ENCODE measurements at regions of chr16 and their contacts with region 1.

Region 1: GRCh38 chr16:85947230-85948137 is 48.5 kb downstream of the IRF8 start:
- DNase-seq: peak; percentile 89
- H3K4me3 Mint-ChIP-seq: peak overlapping the region; percentile 38
- H3K27ac Mint-ChIP-seq: peak overlapping the region; percentile 84
- H3K4me1 Mint-ChIP-seq: peaks cover 70% of the 10 kb centered on the region
- H3K27me3 Mint-ChIP-seq: peaks cover 3% of the 10 kb centered on the region

Region 2: DNA sequence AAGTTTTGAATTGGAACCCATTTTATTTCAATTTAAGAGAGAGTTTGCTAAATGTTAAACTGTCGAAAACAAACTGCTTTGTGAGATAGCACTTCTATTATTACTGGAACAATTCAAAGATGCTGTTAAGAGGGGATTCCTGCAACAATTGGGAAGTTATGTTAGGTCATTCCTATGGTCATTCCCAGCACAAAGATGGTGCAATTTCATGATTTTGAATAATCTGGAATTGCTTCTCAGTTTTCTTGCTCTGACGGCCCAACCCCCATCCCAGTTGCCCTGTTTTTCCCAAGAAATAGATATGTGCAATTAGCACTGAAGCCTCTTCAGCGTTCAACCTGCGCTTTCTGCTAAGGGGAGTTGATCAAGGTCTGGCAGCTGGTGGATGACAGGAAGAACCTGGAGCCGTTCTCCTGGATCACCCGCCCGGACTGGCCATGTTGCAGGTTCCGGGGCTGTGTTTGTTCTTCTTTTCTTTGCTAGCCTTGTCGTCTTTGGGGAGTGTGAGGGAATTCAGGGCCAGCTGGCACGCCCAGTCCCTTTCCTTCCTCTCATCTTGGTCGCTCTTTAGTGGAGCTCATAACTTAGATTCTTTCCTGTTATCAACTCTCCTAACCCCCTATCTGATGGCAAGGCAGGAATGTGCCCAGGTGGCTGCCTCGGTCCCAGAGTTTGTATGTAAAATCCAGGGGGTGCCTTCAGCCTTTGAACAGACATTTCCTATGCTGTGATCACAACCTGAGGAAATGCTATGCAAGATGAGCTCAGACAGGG is 77.5 kb before region 1 on chr16:
- CTCF ChIA-PET with region 1: no interaction called
- intact Hi-C with region 1: loop called (anchors 1 kb)
- DNase-seq: no peak
- H3K4me3 Mint-ChIP-seq: no peak overlapping the region
- H3K27ac Mint-ChIP-seq: peak overlapping the region; percentile 55
- H3K4me1 Mint-ChIP-seq: peaks cover 34% of the 10 kb centered on the region
- H3K27me3 Mint-ChIP-seq: no peaks in the 10 kb centered on the region

Region 3: GRCh38 chr16:85935974-85936760 is 11.3 kb before region 1 on chr16:
- CTCF ChIA-PET with region 1: interaction called, 8 read pairs
- intact Hi-C with region 1: loop called (anchors 1 kb)
- DNase-seq: peak; percentile 90
- H3K4me3 Mint-ChIP-seq: peak overlapping the region; percentile 55
- H3K27ac Mint-ChIP-seq: peak overlapping the region; percentile 96
- H3K4me1 Mint-ChIP-seq: peaks cover 62% of the 10 kb centered on the region
- H3K27me3 Mint-ChIP-seq: no peaks in the 10 kb centered on the region

Region 4: GRCh38 chr16:86199871-86200695 is 252.6 kb after region 1 on chr16:
- CTCF ChIA-PET with region 1: no interaction called
- intact Hi-C with region 1: no loop called
- DNase-seq: no peak
- H3K4me3 Mint-ChIP-seq: no peak overlapping the region
- H3K27ac Mint-ChIP-seq: no peak overlapping the region
- H3K4me1 Mint-ChIP-seq: no peaks in the 10 kb centered on the region
- H3K27me3 Mint-ChIP-seq: peaks cover 58% of the 10 kb centered on the region